ENCODE measurements at regions of chr21 and their contacts with region 1.

Region 1: DNA sequence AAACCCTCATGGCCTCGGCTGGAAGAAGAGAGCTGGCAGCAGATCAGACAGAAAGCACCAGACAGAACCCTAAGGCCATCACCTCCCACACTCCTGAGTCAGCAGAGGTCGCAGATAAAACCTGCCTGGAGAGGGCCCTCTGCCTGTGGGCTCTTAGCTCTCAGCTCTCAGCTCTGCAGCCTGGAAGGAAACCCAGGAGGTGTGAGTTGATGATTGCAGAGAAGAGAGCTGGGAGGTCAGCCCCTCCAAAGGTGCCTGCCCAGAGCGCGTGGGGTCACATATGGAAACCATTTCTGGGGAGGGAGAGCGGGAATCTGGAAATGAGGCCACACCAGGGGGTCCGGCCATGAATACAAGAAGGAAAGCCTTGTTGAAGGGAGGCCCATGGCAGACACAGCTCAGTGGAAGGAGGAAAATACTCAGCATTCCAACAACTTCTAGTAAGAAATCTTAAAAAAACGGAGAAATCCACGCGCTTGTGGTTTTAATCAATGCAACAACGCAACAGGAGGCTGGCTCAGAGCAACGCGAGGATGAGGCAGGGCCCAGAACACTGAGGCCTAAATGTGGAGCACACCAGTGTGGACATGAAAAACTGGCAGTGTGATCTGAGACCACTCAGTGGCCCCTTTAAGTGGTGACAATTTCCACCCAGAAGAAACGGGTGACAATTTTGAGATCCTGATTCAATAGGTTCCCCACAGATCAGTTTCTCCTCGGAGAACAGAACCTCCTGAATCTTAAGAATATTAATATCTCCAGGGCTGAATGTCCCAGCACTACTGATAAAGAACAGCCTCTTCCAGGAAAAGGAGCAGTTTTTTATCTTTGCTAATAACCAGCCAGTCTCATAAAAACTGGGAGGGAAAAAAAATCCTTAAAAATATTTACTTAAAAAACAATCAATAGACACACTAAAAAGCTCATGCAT is 45.7 kb downstream of the PSMG1 start:
- DNase-seq: no peak
- ATAC-seq: no peak
- H3K4me3 ChIP-seq: no peak overlapping the region
- H3K27ac ChIP-seq: peak overlapping the region; percentile 42
- H3K4me1 ChIP-seq: peaks cover 4% of the 10 kb centered on the region
- H3K27me3 ChIP-seq: no peaks in the 10 kb centered on the region
- CTCF ChIP-seq: no peak

Region 2: DNA sequence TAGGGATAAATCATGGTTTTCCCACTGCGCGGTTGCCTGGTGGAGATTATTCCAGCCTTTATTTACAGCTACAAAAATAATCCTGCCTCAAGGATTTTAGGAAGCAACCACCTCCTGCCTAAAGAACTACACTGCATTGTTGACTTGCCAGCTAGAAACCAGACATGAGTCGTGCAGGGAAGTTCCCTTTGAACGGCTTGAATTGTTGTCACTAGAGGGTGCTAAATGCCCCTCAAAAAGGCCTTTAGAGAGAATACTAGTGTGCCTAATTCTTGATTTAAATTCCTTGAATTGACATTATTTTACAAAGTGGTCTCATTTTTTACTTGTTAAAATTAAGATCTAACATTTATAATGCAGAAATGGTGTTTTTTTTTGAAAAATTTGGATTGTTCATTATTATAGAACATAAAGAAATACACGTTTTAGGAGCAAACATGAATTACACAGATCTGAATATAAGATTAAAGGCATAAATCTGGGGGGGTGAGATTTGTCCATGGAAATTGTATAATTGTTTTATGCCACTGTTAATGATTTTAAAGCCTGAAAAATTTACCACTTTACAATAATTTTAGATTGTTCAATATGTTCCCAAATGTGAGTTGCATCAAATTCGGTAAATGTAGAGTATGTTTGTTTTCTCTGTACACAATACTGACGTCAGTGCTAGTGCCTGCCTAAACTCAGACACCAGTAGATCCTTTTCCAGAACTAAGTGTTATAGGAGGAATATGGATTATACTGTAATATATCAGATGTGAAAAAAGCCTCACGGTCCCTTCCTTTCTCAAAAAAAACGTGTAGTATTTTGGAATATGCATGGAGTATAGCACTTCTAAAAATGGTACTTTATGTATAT is 631.6 kb before region 1 on chr21:
- intact Hi-C with region 1: loop called (anchors 10 kb)
- DNase-seq: no peak
- ATAC-seq: peak; percentile 87
- H3K4me3 ChIP-seq: peak overlapping the region; percentile 38
- H3K27ac ChIP-seq: peak overlapping the region; percentile 72
- H3K4me1 ChIP-seq: peaks cover 4% of the 10 kb centered on the region
- H3K27me3 ChIP-seq: no peaks in the 10 kb centered on the region
- CTCF ChIP-seq: peak; percentile 74

Region 3: DNA sequence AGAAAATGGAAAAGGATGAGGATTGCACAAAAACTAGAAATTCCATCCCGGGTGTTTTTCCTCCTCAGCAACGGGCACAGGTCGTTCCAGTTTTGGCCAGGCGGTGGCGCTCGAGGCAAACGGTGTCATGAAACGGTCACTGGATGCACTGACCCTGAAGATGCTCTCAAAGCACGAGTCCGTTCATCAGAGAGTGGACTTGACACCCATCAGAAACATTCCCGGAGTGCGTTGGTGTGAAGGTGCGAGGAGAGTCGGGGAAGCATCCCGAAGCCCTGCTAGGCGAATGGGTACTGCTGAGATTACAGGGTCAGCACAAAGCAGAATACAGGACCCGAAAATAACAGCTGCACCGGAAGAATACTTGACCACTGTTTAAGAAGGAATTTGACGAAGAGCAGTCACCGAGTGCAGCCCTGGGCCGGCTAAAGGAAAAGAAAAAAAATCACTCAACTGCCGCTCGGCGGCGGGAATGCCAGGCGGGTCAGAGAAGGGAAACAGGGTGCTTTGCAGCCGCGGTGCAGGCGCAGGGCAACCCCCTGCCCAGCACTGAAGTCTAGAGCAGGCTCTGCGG is 403.5 kb before region 1 on chr21:
- intact Hi-C with region 1: loop called (anchors 5 kb)
- DNase-seq: peak; percentile 93
- ATAC-seq: peak; percentile 99
- H3K4me3 ChIP-seq: peak overlapping the region; percentile 34
- H3K27ac ChIP-seq: peak overlapping the region; percentile 51
- H3K4me1 ChIP-seq: peaks cover 10% of the 10 kb centered on the region
- H3K27me3 ChIP-seq: no peaks in the 10 kb centered on the region
- CTCF ChIP-seq: peak; percentile 91